Activated T-helper 2 cell treated with anti-CD3 and anti-CD28 coated beads, Interferon-gamma antibody, Interleukin-2, Interleukin-4, amounts not matched to agents 10 μg/mL and 5 μg/mL and 100 μg/mL, durations not matched to agents 14 hours and 24 hours and 36 hours (primary cell): ENCODE measurements at regions of chr2 and their contacts with region 1.

Region 1: DNA sequence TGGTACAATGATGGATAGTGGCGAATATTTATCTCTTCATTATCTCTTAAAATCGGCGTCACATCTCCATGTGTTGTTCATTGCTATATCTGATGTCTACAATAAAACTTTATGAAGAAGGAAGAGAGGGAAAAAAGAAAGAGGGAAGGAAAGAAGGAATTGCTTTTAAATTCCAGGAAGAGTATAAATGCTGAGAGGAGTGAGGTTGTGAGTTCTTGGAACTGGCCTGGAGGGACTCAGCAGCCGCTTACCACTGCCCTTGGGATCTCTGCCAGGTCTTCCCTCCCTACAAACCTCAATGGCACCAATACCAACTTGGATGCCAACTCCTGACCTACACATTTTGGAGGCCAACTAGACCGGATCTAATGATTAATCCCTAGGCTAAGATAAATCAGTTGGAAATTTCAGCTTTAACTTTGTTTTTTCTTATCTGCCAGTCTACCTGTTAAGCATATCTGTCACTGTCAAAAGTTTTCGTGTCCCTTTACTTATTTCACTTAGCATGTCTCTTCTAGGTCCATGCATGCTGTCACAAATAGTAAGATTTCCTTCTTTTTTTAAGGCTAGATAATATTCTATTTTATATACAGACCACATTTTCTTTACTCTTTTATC is 9.8 kb downstream of the SCN9A start:
- DNase-seq: no peak
- H3K4me3 Mint-ChIP-seq: no peak overlapping the region
- H3K27ac Mint-ChIP-seq: no peak overlapping the region
- H3K4me1 Mint-ChIP-seq: no peaks in the 10 kb centered on the region
- H3K27me3 Mint-ChIP-seq: no peaks in the 10 kb centered on the region

Region 2: GRCh38 chr2:166384774-166385173 is 18.9 kb after region 1 on chr2:
- intact Hi-C with region 1: loop called (anchors 2 kb)
- DNase-seq: no peak
- H3K4me3 Mint-ChIP-seq: no peak overlapping the region
- H3K27ac Mint-ChIP-seq: no peak overlapping the region
- H3K4me1 Mint-ChIP-seq: no peaks in the 10 kb centered on the region
- H3K27me3 Mint-ChIP-seq: peaks cover 2% of the 10 kb centered on the region

Region 3: DNA sequence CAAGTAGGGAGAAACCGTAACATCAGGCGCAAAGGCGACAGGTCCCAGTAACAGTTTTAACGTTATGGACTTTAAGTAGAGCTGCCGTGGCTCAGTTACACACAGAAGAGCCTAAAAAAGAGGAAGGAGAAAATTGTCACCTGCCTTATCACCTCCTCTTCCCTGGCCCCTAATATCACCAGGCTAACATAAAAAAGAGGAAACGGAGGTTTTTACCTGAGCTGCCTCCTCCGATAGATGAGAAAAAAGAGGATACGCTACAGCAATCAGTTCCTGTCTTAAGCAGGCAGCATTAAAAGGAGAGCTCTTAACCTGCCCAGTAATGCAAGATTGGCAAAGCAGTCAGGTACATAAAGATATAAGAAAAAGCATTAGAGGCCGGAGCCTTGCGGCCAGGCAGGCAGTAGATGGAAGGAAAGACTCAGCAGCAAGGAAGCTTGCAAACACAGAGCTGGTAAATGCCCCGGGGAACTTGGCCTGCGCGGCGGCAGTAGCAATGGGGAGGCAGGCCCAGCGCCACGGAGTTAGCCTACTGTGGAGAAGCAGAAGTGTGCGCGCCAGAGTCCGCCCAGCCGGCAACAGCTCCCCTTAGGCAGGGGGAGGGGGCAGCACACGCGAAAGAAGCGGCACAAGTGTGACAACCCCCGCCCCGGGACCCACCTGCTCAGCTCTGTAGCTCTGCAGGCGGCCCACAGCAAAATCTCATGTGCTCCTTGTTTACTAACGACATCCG is 244.4 kb after region 1 on chr2:
- intact Hi-C with region 1: no loop called
- DNase-seq: no peak
- H3K4me3 Mint-ChIP-seq: no peak overlapping the region
- H3K27ac Mint-ChIP-seq: no peak overlapping the region
- H3K4me1 Mint-ChIP-seq: no peaks in the 10 kb centered on the region
- H3K27me3 Mint-ChIP-seq: peaks cover 9% of the 10 kb centered on the region